ENCODE measurements at regions of chr12 and their contacts with region 1.

Region 1: DNA sequence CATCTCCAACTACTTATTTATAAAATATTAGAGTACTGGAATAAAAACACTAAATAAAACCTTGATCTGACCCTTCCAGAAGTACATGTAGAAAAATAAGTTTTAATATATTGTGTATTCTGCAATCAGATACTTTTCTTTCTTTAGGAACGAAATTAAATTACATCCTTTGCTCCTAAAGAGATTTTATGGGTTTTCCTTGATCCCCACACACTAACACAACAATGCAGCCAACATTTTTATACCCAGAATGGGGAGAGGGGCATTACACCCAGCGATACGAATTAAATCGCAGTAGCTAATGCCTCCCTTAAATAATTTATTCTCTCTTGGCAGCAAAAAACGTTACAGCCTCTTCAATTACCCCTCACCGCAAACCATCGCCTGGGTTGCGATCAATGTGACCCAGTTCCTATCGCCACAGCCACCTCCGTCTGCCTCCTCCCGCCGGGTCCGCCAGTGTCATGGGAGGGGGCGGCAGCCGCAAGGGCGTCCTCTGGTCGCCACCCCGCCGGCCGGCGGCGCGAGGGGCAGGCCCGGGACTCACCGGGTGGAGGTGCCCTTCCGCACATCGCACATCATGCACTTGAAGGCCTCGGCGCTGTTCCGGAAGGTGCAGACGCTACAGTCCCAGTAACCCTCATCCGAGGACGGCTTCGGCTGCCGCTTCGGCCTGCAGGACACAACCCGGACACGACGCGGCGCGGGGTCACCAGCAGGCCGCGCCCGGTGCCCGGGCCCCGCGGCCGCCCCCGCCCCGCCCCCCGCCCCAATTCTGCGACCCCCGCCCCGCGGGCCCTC is 796 bp downstream of the YAF2 start:
- DNase-seq: peak; percentile 64 to 67
- H3K4me3 ChIP-seq: peak overlapping the region; percentile 74
- H3K27ac ChIP-seq: 0 out of 2 replicates have a peak overlapping the region, but pooled peaks have one; percentile 26
- H3K4me1 ChIP-seq: peaks cover 19% of the 10 kb centered on the region
- H3K27me3 ChIP-seq: no peaks in the 10 kb centered on the region
- CTCF ChIP-seq: peak; percentile 50; the same call in 1 of the 2 replicates

Region 2: GRCh38 chr12:42208574-42208973 is 28.7 kb before region 1 on chr12:
- CTCF ChIA-PET with region 1: no interaction called
- POLR2A ChIA-PET with region 1: interaction called, 12 read pairs
- intact Hi-C with region 1: no loop called
- DNase-seq: no peak
- H3K4me3 ChIP-seq: no peak overlapping the region
- H3K27ac ChIP-seq: no peak overlapping the region
- H3K4me1 ChIP-seq: no peaks in the 10 kb centered on the region; the same call in 1 of the 2 replicates
- H3K27me3 ChIP-seq: no peaks in the 10 kb centered on the region
- CTCF ChIP-seq: no peak

Region 3: GRCh38 chr12:42325653-42326474 is 88.6 kb after region 1 on chr12 and contains the starts of genes PPHLN1 and ZCRB1:
- CTCF ChIA-PET with region 1: no interaction called
- POLR2A ChIA-PET with region 1: no interaction called
- intact Hi-C with region 1: loop called (anchors 5 kb)
- DNase-seq: peak; percentile 71 to 73
- H3K4me3 ChIP-seq: peak within 1 kb of the TSS; percentile 95
- H3K27ac ChIP-seq: peak within 1 kb of the TSS; percentile 64
- H3K4me1 ChIP-seq: peaks cover 17% of the 10 kb centered on the region
- H3K27me3 ChIP-seq: no peaks in the 10 kb centered on the region
- CTCF ChIP-seq: no peak
- total RNA-seq, gene PPHLN1: 51.1 and 61.9 TPM in 2 replicates
- total RNA-seq, gene ZCRB1: 62.7 and 69.3 TPM in 2 replicates